ENCODE measurements at regions of chr4 and their contacts with region 1.

Region 1: DNA sequence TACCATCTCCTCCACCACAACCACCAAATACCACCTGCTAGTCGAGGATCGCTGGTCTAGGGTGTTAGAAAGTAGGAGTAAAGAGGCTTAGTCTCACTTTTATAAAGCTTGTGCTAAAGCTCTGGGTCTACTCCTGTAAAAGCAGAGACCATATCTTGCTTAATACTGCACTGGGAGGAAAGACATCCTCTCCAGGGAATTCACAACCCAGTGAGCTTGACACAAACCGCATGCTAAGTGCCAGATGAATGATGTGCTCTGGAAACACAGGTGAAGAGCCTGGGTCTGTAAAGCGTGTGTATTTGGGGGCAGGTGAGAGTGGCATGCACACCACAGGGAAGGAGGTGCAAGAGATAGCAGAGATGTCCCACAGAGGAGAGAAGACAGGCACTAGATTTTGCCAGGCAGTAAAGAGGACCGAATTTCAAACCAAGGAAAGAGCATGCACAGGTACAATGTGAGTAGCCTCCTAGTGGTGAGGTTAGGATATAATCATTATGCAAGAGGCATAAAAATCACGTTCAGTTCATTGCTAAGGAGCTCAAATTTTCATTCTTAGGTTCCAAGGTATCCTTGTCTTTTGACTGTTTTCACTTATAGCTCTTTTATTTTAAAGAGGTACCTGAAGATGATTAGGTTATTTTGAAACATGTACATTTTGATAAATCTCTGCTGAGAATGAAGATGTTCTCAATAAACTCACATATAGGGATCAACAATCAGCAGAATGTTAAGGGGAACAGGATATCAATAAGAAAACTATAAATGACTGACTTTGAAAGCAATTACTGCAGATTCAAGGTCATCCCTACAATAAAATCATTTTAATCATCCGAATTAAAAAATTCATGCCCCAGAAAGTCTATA is 20.7 kb downstream of the TAPT1 start:
- DNase-seq: no peak
- H3K4me3 ChIP-seq: no peak overlapping the region
- H3K27ac ChIP-seq: no peak overlapping the region
- H3K4me1 ChIP-seq: peaks cover 0 to 9% (median 4%) of the 10 kb centered on the region in 4 experiments; a peak in 5 of 7 replicates
- H3K27me3 ChIP-seq: no peaks in the 10 kb centered on the region
- CTCF ChIP-seq: peak in 2 of 3 experiments; percentile 50 to 78; a peak in 3 of 4 replicates
- EP300 ChIP-seq: no peak
- POLR2A ChIP-seq: no peak
- RAD21 ChIP-seq: peak; percentile 49 to 60

Region 2: GRCh38 chr4:16001484-16001858 is 204.1 kb before region 1 on chr4:
- CTCF ChIA-PET with region 1: interaction called, 11 read pairs
- POLR2A ChIA-PET with region 1: no interaction called
- DNase-seq: peak; percentile 61 to 63
- H3K4me3 ChIP-seq: no peak overlapping the region
- H3K27ac ChIP-seq: no peak overlapping the region
- H3K4me1 ChIP-seq: no peaks in the 10 kb centered on the region; a peak in 1 of 7 replicates
- H3K27me3 ChIP-seq: no peaks in the 10 kb centered on the region
- CTCF ChIP-seq: peak; percentile 78 to 98 (median 82)
- EP300 ChIP-seq: no peak
- POLR2A ChIP-seq: 0 out of 3 replicates have a peak, but pooled peaks of 1 of the 2 experiments have one; percentile 26
- RAD21 ChIP-seq: peak; percentile 84 to 89

Region 3: GRCh38 chr4:16082426-16083240 is 122.9 kb before region 1 on chr4:
- CTCF ChIA-PET with region 1: interaction called, 15 read pairs
- POLR2A ChIA-PET with region 1: interaction called, 3 read pairs
- DNase-seq: peak; percentile 70 to 88
- H3K4me3 ChIP-seq: peak overlapping the region; percentile 62 to 94 (median 81)
- H3K27ac ChIP-seq: peak overlapping the region; percentile 48; the same call in 1 of the 2 replicates
- H3K4me1 ChIP-seq: peaks cover 0 to 9% (median 6%) of the 10 kb centered on the region in 4 experiments; a peak in 3 of 7 replicates
- H3K27me3 ChIP-seq: peaks cover 0 to 10% (median 5%) of the 10 kb centered on the region in 4 experiments; a peak in 5 of 7 replicates
- CTCF ChIP-seq: no peak
- EP300 ChIP-seq: peak in 1 of 2 experiments; percentile 11; a peak in 1 of 3 replicates
- POLR2A ChIP-seq: peak; percentile 65 to 92
- RAD21 ChIP-seq: peak in 1 of 2 experiments; percentile 14; a peak in 1 of 4 replicates

Region 4: GRCh38 chr4:16217300-16218051 is 11.9 kb after region 1 on chr4:
- CTCF ChIA-PET with region 1: interaction called, 38 read pairs
- POLR2A ChIA-PET with region 1: interaction called, 6 read pairs
- DNase-seq: no peak
- H3K4me3 ChIP-seq: no peak overlapping the region
- H3K27ac ChIP-seq: no peak overlapping the region
- H3K4me1 ChIP-seq: peaks cover 0 to 3% (median 0%) of the 10 kb centered on the region in 4 experiments; a peak in 1 of 7 replicates
- H3K27me3 ChIP-seq: no peaks in the 10 kb centered on the region
- CTCF ChIP-seq: no peak
- EP300 ChIP-seq: no peak
- POLR2A ChIP-seq: no peak
- RAD21 ChIP-seq: no peak

Region 5: GRCh38 chr4:16250665-16251365 is 45.3 kb after region 1 on chr4:
- CTCF ChIA-PET with region 1: interaction called, 12 read pairs
- POLR2A ChIA-PET with region 1: interaction called, 4 read pairs
- DNase-seq: no peak
- H3K4me3 ChIP-seq: no peak overlapping the region
- H3K27ac ChIP-seq: no peak overlapping the region
- H3K4me1 ChIP-seq: no peaks in the 10 kb centered on the region
- H3K27me3 ChIP-seq: no peaks in the 10 kb centered on the region
- CTCF ChIP-seq: no peak
- EP300 ChIP-seq: no peak
- POLR2A ChIP-seq: no peak
- RAD21 ChIP-seq: no peak